Mammary epithelial cell (primary cell): ENCODE measurements at regions of chr15 and their contacts with region 1.

Region 1: GRCh38 chr15:85367741-85368140 is 12.7 kb upstream of the AKAP13 start:
- DNase-seq: no peak
- H3K4me3 ChIP-seq: no peak overlapping the region
- H3K27ac ChIP-seq: no peak overlapping the region
- H3K4me1 ChIP-seq: no peaks in the 10 kb centered on the region
- H3K27me3 ChIP-seq: no peaks in the 10 kb centered on the region
- CTCF ChIP-seq: no peak

Region 2: GRCh38 chr15:84915011-84915958 is 452.5 kb before region 1 on chr15:
- CTCF ChIA-PET with region 1: no interaction called
- dilution Hi-C with region 1: no loop called
- in situ Hi-C with region 1: no loop called
- intact Hi-C with region 1: no loop called
- DNase-seq: peak; percentile 92
- H3K4me3 ChIP-seq: no peak overlapping the region
- H3K27ac ChIP-seq: peak overlapping the region; percentile 25
- H3K4me1 ChIP-seq: peaks cover 41% of the 10 kb centered on the region
- H3K27me3 ChIP-seq: no peaks in the 10 kb centered on the region
- CTCF ChIP-seq: no peak

Region 3: GRCh38 chr15:85306946-85307708 is 60.6 kb before region 1 on chr15:
- CTCF ChIA-PET with region 1: no interaction called
- dilution Hi-C with region 1: loop called (anchors 5 kb)
- in situ Hi-C with region 1: no loop called
- intact Hi-C with region 1: no loop called
- DNase-seq: no peak
- H3K4me3 ChIP-seq: no peak overlapping the region
- H3K27ac ChIP-seq: no peak overlapping the region
- H3K4me1 ChIP-seq: no peaks in the 10 kb centered on the region
- H3K27me3 ChIP-seq: no peaks in the 10 kb centered on the region
- CTCF ChIP-seq: no peak